GM10248 (cell line): ENCODE measurements at regions of chr7 and their contacts with region 1.

Region 1: GRCh38 chr7:37016064-37016878 is 292.0 kb upstream of the AOAH start:
- DNase-seq: peak; percentile 22
- CTCF ChIP-seq: no peak

Region 2: DNA sequence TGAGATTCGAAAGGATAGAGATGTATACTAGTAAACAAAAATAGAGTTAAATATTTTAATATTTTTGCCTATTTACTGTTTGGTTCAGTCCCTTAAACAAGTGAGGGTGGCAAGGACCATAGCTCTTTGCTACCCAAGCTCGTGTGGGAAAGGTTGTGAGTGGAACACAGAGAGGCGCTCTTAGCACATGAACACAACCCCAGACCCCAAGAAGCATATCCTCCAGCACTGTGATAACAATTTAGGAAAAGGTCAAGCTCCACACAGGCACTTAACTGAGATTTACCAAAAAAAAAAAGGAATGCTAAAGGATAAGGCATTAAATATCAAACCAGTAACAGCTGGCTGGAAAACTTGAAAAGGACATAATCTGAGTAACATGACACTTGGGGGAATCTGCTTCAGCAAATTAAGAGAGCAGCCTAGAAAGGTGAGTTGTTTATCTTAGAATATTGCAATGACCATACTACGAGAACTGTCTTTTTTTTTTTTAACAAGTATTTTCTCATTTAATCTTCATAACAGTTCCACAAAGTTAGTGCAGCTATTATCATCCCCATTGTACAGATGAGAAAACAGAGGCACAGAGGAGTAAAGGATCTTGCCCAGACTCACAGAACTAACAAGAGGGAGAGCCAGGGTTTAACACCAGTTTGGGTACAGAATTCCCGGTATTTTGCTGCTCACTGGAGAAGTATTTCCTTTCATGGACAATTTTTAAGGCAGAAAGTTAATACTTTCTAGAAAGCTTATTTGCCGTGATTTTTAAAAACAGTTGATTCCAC is 11.5 kb after region 1 on chr7:
- CTCF ChIA-PET with region 1: interaction called, 25 read pairs
- POLR2A ChIA-PET with region 1: no interaction called
- DNase-seq: no peak
- CTCF ChIP-seq: no peak

Region 3: GRCh38 chr7:37193087-37193774 is 177.0 kb after region 1 on chr7:
- CTCF ChIA-PET with region 1: no interaction called
- POLR2A ChIA-PET with region 1: no interaction called
- DNase-seq: no peak
- CTCF ChIP-seq: no peak